Activated CD4-positive, alpha-beta T cell treated with anti-CD3 and anti-CD28 coated beads for 36 hours (primary cell): ENCODE measurements at regions of chr14 and their contacts with region 1.

Region 1: GRCh38 chr14:66507722-66508546 is at the start of gene GPHN:
- DNase-seq: peak; percentile 96
- ATAC-seq: peak; percentile 96
- H3K4me3 Mint-ChIP-seq: peak within 1 kb of the TSS; percentile 90
- H3K27ac Mint-ChIP-seq: peak within 1 kb of the TSS; percentile 94
- H3K4me1 Mint-ChIP-seq: peaks cover 39% of the 10 kb centered on the region
- H3K27me3 Mint-ChIP-seq: peaks cover 3% of the 10 kb centered on the region
- total RNA-seq, gene GPHN: 29.8 to 37.5 TPM

Region 2: DNA sequence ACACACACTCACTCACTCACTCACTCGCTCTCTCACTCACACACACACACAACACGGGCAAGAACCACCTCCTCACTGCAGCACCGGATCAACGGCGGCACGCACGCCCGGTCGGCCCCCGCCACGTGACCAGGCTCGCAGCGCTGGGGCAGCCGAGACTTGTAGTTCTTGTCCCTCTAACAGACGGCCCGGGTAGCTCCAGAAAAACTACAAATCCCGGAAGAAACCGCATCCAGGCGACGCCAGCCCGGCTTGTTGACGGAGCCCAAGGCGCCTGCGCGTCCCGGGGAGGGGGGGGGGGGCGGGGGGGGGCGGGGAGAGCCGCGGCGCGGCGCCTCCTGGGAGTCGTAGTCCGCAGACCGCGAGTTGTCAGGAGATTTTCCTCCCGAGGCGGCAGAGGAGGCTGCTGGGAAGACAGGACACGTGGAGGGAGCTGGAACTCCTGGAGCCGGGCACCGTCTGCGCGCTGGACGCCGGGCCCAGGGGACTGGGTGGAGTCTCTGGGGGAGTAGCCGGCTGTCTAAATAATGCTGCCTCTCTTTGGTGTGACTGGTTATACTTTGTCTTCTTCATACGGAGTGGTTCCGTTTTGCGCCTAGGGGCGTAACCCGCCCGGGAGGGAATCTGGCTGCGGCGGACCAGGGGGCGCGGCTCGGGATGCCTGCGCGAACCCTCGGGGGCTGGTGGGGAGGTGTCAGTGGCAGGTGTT is 1405.3 kb before region 1 on chr14 and contains the start of gene MAX:
- CTCF ChIA-PET with region 1: no interaction called
- POLR2A ChIA-PET with region 1: no interaction called
- intact Hi-C with region 1: loop called in 1 of 2 experiments (anchors 5 kb)
- DNase-seq: peak; percentile 99
- ATAC-seq: peak; percentile 95
- H3K4me3 Mint-ChIP-seq: peak within 1 kb of the TSS; percentile 89
- H3K27ac Mint-ChIP-seq: peak within 1 kb of the TSS; percentile 96
- H3K4me1 Mint-ChIP-seq: peaks cover 40% of the 10 kb centered on the region
- H3K27me3 Mint-ChIP-seq: peaks cover 2% of the 10 kb centered on the region
- total RNA-seq, gene MAX: 93.6 to 136 TPM

Region 3: DNA sequence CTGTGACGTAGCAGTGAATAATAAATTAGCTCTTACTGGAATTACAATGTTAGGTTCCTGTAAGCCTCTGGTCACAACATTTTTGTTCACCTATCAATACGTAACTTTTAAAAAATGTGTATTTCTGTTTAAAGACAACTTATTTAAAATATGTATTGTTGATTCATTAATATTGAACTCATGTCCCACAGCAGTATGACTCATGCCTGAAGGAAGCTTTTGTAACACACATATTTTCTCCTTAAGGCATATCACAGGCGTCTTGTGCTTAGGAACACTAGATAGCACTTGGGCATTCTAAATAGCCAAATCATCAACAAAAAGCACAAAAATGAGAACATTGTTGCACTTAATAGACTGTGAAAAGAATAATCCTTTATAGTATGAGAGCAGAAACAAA is 92.5 kb after region 1 on chr14:
- CTCF ChIA-PET with region 1: no interaction called
- POLR2A ChIA-PET with region 1: interaction called, 6 read pairs
- intact Hi-C with region 1: loop called (anchors 5 kb)
- DNase-seq: no peak
- ATAC-seq: no peak
- H3K4me3 Mint-ChIP-seq: no peak overlapping the region
- H3K27ac Mint-ChIP-seq: no peak overlapping the region
- H3K4me1 Mint-ChIP-seq: peaks cover 14% of the 10 kb centered on the region
- H3K27me3 Mint-ChIP-seq: no peaks in the 10 kb centered on the region

Region 4: GRCh38 chr14:66606826-66607225 is 98.9 kb after region 1 on chr14:
- CTCF ChIA-PET with region 1: no interaction called
- POLR2A ChIA-PET with region 1: interaction called, 6 read pairs
- intact Hi-C with region 1: loop called (anchors 5 kb)
- DNase-seq: no peak
- ATAC-seq: peak; percentile 84
- H3K4me3 Mint-ChIP-seq: no peak overlapping the region
- H3K27ac Mint-ChIP-seq: no peak overlapping the region
- H3K4me1 Mint-ChIP-seq: peaks cover 34% of the 10 kb centered on the region
- H3K27me3 Mint-ChIP-seq: no peaks in the 10 kb centered on the region

Region 5: GRCh38 chr14:67674481-67675169 is 1166.7 kb after region 1 on chr14 and contains the start of gene VTI1B:
- CTCF ChIA-PET with region 1: no interaction called
- POLR2A ChIA-PET with region 1: no interaction called
- intact Hi-C with region 1: loop called in 1 of 2 experiments (anchors 10 kb)
- DNase-seq: peak; percentile 83
- ATAC-seq: peak; percentile 94
- H3K4me3 Mint-ChIP-seq: peak within 1 kb of the TSS; percentile 81
- H3K27ac Mint-ChIP-seq: peak within 1 kb of the TSS; percentile 82
- H3K4me1 Mint-ChIP-seq: peaks cover 32% of the 10 kb centered on the region
- H3K27me3 Mint-ChIP-seq: no peaks in the 10 kb centered on the region
- total RNA-seq, gene VTI1B: 42.0 to 58.3 TPM

Region 6: GRCh38 chr14:67722293-67722692 is 1214.4 kb after region 1 on chr14:
- CTCF ChIA-PET with region 1: no interaction called
- POLR2A ChIA-PET with region 1: no interaction called
- intact Hi-C with region 1: no loop called
- DNase-seq: peak; percentile 10
- ATAC-seq: peak; percentile 39
- H3K4me3 Mint-ChIP-seq: no peak overlapping the region
- H3K27ac Mint-ChIP-seq: no peak overlapping the region
- H3K4me1 Mint-ChIP-seq: peaks cover 7% of the 10 kb centered on the region
- H3K27me3 Mint-ChIP-seq: peaks cover 35% of the 10 kb centered on the region